Activated CD8-positive, alpha-beta memory T cell treated with anti-CD3 and anti-CD28 coated beads, Interleukin-2, amount 10 ng/mL, durations not matched to agents 7 days and 5 days (primary cell): ENCODE measurements at regions of chr1 and their contacts with region 1.

Region 1: GRCh38 chr1:180252638-180253536 is 22.8 kb downstream of the LHX4 start:
- DNase-seq: peak; percentile 81
- ATAC-seq: peak; percentile 67
- H3K4me3 Mint-ChIP-seq: no peak overlapping the region
- H3K27ac Mint-ChIP-seq: no peak overlapping the region
- H3K4me1 Mint-ChIP-seq: no peaks in the 10 kb centered on the region
- H3K27me3 Mint-ChIP-seq: no peaks in the 10 kb centered on the region

Region 2: DNA sequence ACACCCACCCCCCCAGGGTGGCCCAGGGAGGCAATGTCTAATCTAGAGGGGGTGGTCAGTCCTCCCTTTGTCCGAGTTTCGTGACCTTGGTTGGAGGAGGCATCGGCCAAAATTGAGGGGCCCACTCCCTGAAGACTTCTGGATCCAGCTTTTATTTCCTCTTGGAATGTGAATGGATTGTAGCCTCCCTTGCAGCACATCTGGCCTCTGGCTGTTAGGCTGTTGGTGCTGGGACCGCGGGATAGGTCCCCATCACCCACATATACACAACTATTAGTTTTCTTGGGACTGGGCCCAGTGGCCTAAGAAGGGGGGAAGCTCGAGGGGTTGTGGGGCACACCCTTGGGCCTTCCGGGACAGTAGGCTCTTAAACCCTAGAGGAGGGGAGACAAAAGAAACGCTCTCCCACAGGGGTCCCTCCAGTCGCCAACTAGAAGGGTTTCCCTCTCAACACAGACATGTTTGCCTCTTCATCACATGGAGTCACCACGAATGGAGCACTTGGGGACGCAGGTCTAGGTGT is 20.3 kb before region 1 on chr1:
- CTCF ChIA-PET with region 1: no interaction called
- DNase-seq: no peak
- ATAC-seq: no peak
- H3K4me3 Mint-ChIP-seq: no peak overlapping the region
- H3K27ac Mint-ChIP-seq: no peak overlapping the region
- H3K4me1 Mint-ChIP-seq: peaks cover 40% of the 10 kb centered on the region
- H3K27me3 Mint-ChIP-seq: peaks cover 86% of the 10 kb centered on the region

Region 3: GRCh38 chr1:180309338-180309737 is 56.5 kb after region 1 on chr1:
- CTCF ChIA-PET with region 1: no interaction called
- DNase-seq: no peak
- ATAC-seq: no peak
- H3K4me3 Mint-ChIP-seq: no peak overlapping the region
- H3K27ac Mint-ChIP-seq: no peak overlapping the region
- H3K4me1 Mint-ChIP-seq: no peaks in the 10 kb centered on the region
- H3K27me3 Mint-ChIP-seq: no peaks in the 10 kb centered on the region

Region 4: GRCh38 chr1:180415985-180416633 is 163.2 kb after region 1 on chr1:
- CTCF ChIA-PET with region 1: interaction called, 25 read pairs
- DNase-seq: no peak
- ATAC-seq: peak; percentile 30
- H3K4me3 Mint-ChIP-seq: no peak overlapping the region
- H3K27ac Mint-ChIP-seq: no peak overlapping the region
- H3K4me1 Mint-ChIP-seq: no peaks in the 10 kb centered on the region
- H3K27me3 Mint-ChIP-seq: no peaks in the 10 kb centered on the region

Region 5: DNA sequence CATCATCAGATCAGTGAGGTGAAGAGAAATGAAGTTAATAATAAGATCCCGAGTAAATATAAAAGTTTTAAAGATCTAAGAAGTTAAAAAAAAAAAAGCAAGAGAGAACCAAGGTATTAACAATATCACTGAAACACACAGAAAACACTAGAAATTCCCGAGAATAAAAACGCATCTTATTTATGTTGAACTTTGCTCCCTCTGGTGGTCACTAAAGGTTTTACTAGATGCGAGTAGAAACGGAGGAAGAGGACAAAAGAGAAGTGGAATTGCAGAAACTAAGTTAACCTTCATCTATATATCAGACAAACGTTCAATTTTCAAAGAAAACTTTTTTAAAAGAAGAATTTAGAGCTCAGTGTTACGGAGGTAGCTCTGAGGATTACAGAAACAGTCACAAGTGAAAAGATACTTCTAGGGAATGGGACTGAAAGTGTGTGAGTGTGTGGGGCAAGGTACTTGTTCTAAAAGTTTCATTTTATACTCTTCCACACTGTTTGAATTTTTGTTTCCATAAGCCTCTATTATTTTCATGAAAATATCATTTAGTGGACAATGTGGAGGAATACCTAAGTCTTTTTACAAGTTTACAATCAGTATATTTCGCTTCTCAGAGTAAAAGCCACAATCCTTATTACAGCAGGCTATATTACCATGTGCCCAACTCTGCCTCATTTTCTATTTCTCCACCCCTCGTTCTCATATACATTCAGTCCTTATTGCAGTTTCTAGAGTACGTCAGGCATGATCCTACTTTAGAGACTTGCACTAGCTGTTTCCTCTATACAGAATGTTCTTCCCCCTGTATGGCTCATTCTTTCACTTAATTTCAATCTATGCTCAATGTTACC is 229.8 kb after region 1 on chr1:
- CTCF ChIA-PET with region 1: interaction called, 15 read pairs
- DNase-seq: no peak
- ATAC-seq: no peak
- H3K4me3 Mint-ChIP-seq: no peak overlapping the region
- H3K27ac Mint-ChIP-seq: no peak overlapping the region
- H3K4me1 Mint-ChIP-seq: peaks cover 6% of the 10 kb centered on the region
- H3K27me3 Mint-ChIP-seq: no peaks in the 10 kb centered on the region